CD14-positive monocyte (primary cell): ENCODE measurements at regions of chr11 and their contacts with region 1.

Region 1: DNA sequence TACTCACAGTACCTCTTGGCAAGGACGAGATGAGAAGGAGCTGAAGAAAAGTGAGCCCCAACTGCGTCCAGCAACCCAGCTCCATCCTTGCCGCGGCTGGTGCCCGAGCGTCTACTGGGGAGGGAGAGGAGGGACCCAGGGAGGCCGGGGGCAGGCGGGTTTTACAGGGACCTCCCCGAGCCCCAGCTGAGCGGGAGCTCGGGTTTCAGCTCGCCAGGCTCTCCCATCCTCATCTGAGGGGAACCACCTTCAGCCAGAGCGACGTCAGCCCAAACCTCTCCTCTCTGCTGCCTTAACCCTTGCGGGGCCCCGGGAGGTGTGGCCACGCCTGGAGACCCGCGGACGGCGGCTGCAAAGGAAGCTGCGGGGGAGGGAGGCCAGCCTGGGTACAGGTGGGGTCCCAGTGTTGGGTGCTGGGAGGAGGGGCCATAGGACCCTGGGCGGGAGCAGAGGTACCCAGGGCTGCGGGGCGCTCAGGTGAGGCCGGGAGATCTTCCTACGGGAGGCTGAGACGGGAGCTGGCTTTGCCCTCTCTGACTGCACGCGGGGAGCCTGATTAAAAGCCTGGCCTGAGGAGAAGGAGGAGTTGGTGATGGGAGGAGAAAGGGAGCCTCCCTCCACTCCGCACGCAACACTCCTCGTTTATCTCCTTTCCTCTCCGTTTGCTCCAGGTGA is at the start of gene PAMR1:
- DNase-seq: no peak
- H3K4me3 ChIP-seq: no peak within 1 kb of the TSS
- H3K4me3 Mint-ChIP-seq: peak within 1 kb of the TSS in 1 of 2 donors; percentile 59
- H3K27ac ChIP-seq: no peak within 1 kb of the TSS
- H3K27ac Mint-ChIP-seq: peak within 1 kb of the TSS in 1 of 7 donors; percentile 9
- H3K4me1 ChIP-seq: no peaks in the 10 kb centered on the region
- H3K4me1 Mint-ChIP-seq: no peaks in the 10 kb centered on the region
- H3K27me3 ChIP-seq: peaks cover 46 to 66% of the 10 kb centered on the region in 2 donors
- H3K27me3 Mint-ChIP-seq: peaks cover 55 to 83% (median 62%) of the 10 kb centered on the region in 3 donors
- CTCF ChIP-seq: no peak
- polyA plus RNA-seq, gene PAMR1: not detected

Region 2: GRCh38 chr11:35100013-35100383 is 425.6 kb before region 1 on chr11:
- intact Hi-C with region 1: no loop called
- DNase-seq: no peak
- H3K4me3 ChIP-seq: no peak overlapping the region
- H3K4me3 Mint-ChIP-seq: no peak overlapping the region
- H3K27ac ChIP-seq: no peak overlapping the region
- H3K27ac Mint-ChIP-seq: no peak overlapping the region
- H3K4me1 ChIP-seq: peaks cover 0 to 6% of the 10 kb centered on the region in 2 donors
- H3K4me1 Mint-ChIP-seq: peaks cover 8% of the 10 kb centered on the region
- H3K27me3 ChIP-seq: no peaks in the 10 kb centered on the region
- H3K27me3 Mint-ChIP-seq: no peaks in the 10 kb centered on the region
- CTCF ChIP-seq: no peak

Region 3: DNA sequence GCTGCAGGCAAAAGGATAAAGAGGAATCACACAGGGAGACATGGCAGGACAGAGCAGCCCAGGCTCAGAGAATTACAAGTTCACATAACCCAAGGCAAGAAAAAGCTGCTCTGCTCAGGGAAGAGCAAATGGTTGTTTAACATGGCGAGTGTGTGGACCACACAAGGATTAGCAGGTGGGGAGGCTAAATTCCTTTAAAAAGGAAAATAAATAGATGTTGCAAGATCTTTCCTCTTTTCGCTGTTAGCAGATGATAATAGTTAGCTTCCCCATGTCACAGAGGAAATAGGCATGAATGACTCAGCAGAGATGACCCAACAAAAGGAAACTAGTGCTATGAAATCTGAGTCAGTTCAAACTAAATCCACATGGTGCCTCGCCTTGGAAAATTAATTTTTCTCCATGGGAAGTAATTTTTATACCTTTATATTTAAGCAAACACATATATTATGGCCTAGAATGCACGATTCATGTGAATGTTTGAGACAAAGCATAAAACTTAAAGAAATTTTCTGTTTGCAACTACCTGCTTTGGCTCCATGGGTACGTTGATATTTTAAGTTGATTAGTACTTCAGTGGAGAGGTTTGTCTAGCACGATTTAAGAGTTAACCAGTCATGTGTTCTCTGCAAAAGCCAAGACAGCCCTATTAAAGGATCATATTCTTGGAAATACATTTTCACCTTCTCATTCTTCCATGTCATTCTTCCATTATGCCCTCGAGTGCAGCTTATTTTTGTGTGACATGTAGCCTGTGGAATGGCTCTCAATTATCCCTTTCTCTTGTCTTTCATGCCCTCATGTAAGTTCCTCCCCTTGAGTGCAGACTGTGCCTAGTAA is 54.1 kb after region 1 on chr11:
- intact Hi-C with region 1: loop called in 1 of 2 experiments (anchors 10 kb)
- DNase-seq: peak; percentile 54 to 82 (median 70)
- H3K4me3 ChIP-seq: peak overlapping the region in 1 of 3 experiments; percentile 46
- H3K4me3 Mint-ChIP-seq: peak overlapping the region in 1 of 2 donors; percentile 46
- H3K27ac ChIP-seq: no peak overlapping the region
- H3K27ac Mint-ChIP-seq: peak overlapping the region in 5 of 7 donors; percentile 60 to 85 (median 76)
- H3K4me1 ChIP-seq: peaks cover 11 to 13% of the 10 kb centered on the region in 2 donors
- H3K4me1 Mint-ChIP-seq: peaks cover 15% of the 10 kb centered on the region
- H3K27me3 ChIP-seq: peaks cover 0 to 2% of the 10 kb centered on the region in 2 donors
- H3K27me3 Mint-ChIP-seq: peaks cover 2 to 13% (median 12%) of the 10 kb centered on the region in 3 donors
- CTCF ChIP-seq: no peak